Activated T-helper 2 cell treated with anti-CD3 and anti-CD28 coated beads, Interferon-gamma antibody, Interleukin-2, Interleukin-4, amounts not matched to agents 10 μg/mL and 5 μg/mL and 100 μg/mL, durations not matched to agents 14 hours and 24 hours and 36 hours (primary cell): ENCODE measurements at regions of chr15 and their contacts with region 1.

Region 1: GRCh38 chr15:55829826-55830225 is 86.9 kb upstream of the PRTG start:
- DNase-seq: peak; percentile 18
- H3K4me3 Mint-ChIP-seq: no peak overlapping the region
- H3K27ac Mint-ChIP-seq: peak overlapping the region; percentile 54
- H3K4me1 Mint-ChIP-seq: peaks cover 33% of the 10 kb centered on the region
- H3K27me3 Mint-ChIP-seq: no peaks in the 10 kb centered on the region

Region 2: GRCh38 chr15:55661428-55661827 is 168.4 kb before region 1 on chr15:
- intact Hi-C with region 1: loop called (anchors 2 kb)
- DNase-seq: no peak
- H3K4me3 Mint-ChIP-seq: no peak overlapping the region
- H3K27ac Mint-ChIP-seq: peak overlapping the region; percentile 78
- H3K4me1 Mint-ChIP-seq: peaks cover 30% of the 10 kb centered on the region
- H3K27me3 Mint-ChIP-seq: no peaks in the 10 kb centered on the region

Region 3: DNA sequence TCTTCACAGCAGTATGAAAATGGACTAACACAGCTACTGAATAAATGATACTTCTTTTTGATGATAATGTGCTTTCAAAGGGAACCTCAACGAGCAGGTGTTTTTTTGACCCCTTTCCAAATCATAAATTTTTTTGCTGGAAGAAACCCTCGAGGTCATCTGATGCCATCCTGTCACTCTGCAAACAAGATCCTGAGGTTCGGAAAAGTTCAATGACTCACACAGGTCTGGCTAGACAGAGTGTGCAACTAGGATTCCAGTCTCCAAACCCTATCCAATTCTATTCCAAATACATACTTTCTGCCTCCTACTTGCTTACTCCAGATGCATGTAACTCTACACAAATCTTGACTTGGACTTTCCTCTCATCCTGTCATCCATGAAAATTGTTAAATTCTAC is 38.9 kb after region 1 on chr15:
- intact Hi-C with region 1: no loop called
- DNase-seq: no peak
- H3K4me3 Mint-ChIP-seq: no peak overlapping the region
- H3K27ac Mint-ChIP-seq: no peak overlapping the region
- H3K4me1 Mint-ChIP-seq: peaks cover 4% of the 10 kb centered on the region
- H3K27me3 Mint-ChIP-seq: peaks cover 2% of the 10 kb centered on the region

Region 4: GRCh38 chr15:56464893-56465520 is 635.2 kb after region 1 on chr15 and contains the start of gene MNS1:
- intact Hi-C with region 1: loop called (anchors 5 kb)
- DNase-seq: peak; percentile 76
- H3K4me3 Mint-ChIP-seq: peak within 1 kb of the TSS; percentile 87
- H3K27ac Mint-ChIP-seq: peak within 1 kb of the TSS; percentile 36
- H3K4me1 Mint-ChIP-seq: peaks cover 26% of the 10 kb centered on the region
- H3K27me3 Mint-ChIP-seq: peaks cover 23% of the 10 kb centered on the region
- total RNA-seq, gene MNS1: 0.14 and 1.1 TPM in 2 replicates